Activated naive CD4-positive, alpha-beta T cell treated with anti-CD3 and anti-CD28 coated beads for 36 hours (primary cell): ENCODE measurements at regions of chr7 and their contacts with region 1.

Region 1: DNA sequence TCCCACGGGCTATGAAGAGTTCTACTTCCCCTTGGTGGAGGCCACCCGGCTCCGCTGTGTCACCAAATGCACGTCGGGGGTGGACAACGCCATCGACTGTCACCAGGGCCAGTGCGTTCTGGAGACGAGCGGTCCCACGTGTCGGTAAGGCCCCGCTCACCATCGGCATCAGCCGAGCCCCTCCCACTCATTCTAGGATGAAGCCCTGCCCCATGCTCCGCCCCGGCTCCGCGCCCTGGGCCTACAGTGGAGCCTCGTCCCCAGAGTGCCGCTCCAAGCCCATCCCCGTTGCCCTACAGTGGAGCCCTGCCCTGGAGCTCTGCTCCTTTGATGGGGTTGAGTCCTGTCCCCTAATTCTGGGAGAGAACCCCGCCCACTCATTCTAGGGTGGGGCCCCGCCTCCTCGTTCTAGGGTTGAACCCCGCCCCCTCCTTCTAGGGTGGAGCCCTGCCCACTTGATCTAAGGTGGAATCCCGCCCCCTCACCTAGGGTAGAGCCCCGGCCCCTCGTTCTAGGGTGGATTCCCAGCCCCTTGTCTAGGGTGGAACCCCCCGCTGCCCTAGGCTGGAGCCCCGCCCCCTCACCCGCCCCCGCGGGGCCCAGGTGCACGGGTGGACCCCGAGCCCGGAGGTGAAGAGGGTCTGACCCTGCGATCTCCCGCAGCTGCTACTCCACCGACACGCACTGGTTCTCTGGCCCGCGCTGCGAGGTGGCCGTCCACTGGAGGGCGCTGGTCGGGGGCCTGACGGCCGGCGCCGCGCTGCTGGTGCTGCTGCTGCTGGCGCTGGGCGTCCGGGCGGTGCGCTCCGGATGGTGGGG is 3.4 kb upstream of the MUC12 start:
- DNase-seq: peak; percentile 85
- H3K4me3 Mint-ChIP-seq: peak overlapping the region; percentile 60
- H3K27ac Mint-ChIP-seq: no peak overlapping the region
- H3K4me1 Mint-ChIP-seq: peaks cover 18% of the 10 kb centered on the region
- H3K27me3 Mint-ChIP-seq: peaks cover 49% of the 10 kb centered on the region

Region 2: DNA sequence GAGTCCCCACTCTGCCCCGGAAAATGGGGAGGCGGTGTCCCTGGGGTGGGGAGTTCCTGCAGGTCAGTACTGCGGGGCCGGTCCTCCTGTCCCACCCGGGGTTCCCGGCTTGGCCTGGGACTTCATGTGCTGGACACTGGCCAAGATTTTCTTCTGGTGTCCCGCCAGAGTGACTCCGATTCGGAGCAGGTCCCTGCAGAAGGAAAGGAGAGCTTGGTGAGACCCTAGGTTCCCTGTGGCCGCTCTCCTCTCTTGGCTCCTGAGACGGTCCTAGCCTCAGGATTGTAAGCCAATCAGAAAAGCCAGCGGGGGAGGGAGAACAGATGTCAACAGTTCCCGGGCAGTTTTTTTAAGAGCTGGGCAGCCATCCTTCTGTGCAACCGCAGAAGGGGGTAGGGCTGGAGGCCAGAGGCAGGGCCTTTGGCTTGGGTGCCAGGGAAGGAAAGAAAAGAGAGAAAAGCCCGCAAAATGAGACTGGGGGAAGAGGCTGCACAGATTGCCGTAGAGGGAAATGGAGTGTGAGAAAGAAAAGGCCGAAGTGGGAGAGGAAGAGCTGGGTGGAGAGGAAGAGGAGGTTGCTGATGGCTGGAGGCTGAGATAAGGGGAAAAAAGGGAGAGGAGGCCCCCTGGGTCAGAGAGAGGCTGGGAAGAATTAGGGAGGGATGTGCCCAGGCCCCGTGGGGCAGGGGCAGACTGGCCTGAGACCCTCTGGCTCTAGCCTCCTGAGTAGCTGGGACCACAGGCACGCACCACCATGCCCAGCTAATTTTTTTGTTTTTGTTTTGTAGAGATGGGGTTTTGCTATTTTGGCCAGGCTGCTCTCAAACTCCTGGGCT is 162.3 kb before region 1 on chr7:
- CTCF ChIA-PET with region 1: no interaction called
- intact Hi-C with region 1: loop called (anchors 5 kb)
- DNase-seq: peak; percentile 58
- H3K4me3 Mint-ChIP-seq: no peak overlapping the region
- H3K27ac Mint-ChIP-seq: no peak overlapping the region
- H3K4me1 Mint-ChIP-seq: peaks cover 9% of the 10 kb centered on the region
- H3K27me3 Mint-ChIP-seq: peaks cover 4% of the 10 kb centered on the region

Region 3: GRCh38 chr7:100887516-100888290 is 78.2 kb before region 1 on chr7:
- CTCF ChIA-PET with region 1: no interaction called
- intact Hi-C with region 1: no loop called
- DNase-seq: peak; percentile 68
- H3K4me3 Mint-ChIP-seq: peak overlapping the region; percentile 85
- H3K27ac Mint-ChIP-seq: peak overlapping the region; percentile 87
- H3K4me1 Mint-ChIP-seq: peaks cover 50% of the 10 kb centered on the region
- H3K27me3 Mint-ChIP-seq: peaks cover 11% of the 10 kb centered on the region

Region 4: GRCh38 chr7:101017064-101017777 is 51.3 kb after region 1 on chr7:
- CTCF ChIA-PET with region 1: no interaction called
- intact Hi-C with region 1: loop called (anchors 5 kb)
- DNase-seq: peak; percentile 87
- H3K4me3 Mint-ChIP-seq: peak overlapping the region; percentile 57
- H3K27ac Mint-ChIP-seq: no peak overlapping the region
- H3K4me1 Mint-ChIP-seq: peaks cover 18% of the 10 kb centered on the region
- H3K27me3 Mint-ChIP-seq: peaks cover 12% of the 10 kb centered on the region

Region 5: GRCh38 chr7:101058355-101058754 is 92.4 kb after region 1 on chr7:
- CTCF ChIA-PET with region 1: interaction called, 4 read pairs
- intact Hi-C with region 1: loop called (anchors 1 kb)
- DNase-seq: peak; percentile 68
- H3K4me3 Mint-ChIP-seq: no peak overlapping the region
- H3K27ac Mint-ChIP-seq: no peak overlapping the region
- H3K4me1 Mint-ChIP-seq: peaks cover 4% of the 10 kb centered on the region
- H3K27me3 Mint-ChIP-seq: peaks cover 32% of the 10 kb centered on the region

Region 6: GRCh38 chr7:101077303-101078089 is 111.6 kb after region 1 on chr7:
- CTCF ChIA-PET with region 1: no interaction called
- intact Hi-C with region 1: loop called (anchors 1 kb)
- DNase-seq: peak; percentile 94
- H3K4me3 Mint-ChIP-seq: no peak overlapping the region
- H3K27ac Mint-ChIP-seq: no peak overlapping the region
- H3K4me1 Mint-ChIP-seq: peaks cover 7% of the 10 kb centered on the region
- H3K27me3 Mint-ChIP-seq: no peaks in the 10 kb centered on the region